Endothelial cell of umbilical vein (primary cell): ENCODE measurements at regions of chr9 and their contacts with region 1.

Region 1: DNA sequence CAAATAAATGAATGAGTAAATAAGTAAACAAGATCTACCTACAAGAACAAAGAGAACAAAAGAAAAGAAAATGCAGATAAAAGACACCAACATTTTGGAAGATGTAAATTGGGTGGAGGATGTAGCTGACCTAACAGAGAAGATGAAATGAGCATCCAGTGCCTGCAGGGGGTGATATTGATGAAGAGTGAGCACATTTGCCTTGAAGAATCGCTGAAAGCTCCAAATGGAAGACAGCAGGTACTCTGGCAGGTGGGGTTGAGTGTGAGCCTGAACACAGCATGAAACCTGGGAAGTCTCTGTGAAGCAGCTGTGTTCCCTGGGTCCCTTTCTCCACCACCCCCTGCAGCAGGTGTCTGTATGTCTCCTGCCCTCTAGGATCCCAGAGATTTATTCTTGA is 125.6 kb downstream of the NXNL2 start:
- DNase-seq: peak; percentile 46
- H3K4me3 ChIP-seq: no peak overlapping the region
- H3K27ac ChIP-seq: no peak overlapping the region
- H3K4me1 ChIP-seq: no peaks in the 10 kb centered on the region
- H3K27me3 ChIP-seq: no peaks in the 10 kb centered on the region
- CTCF ChIP-seq: peak; percentile 36 to 50
- POLR2A ChIP-seq: no peak

Region 2: GRCh38 chr9:88488166-88488565 is 172.4 kb before region 1 on chr9:
- CTCF ChIA-PET with region 1: no interaction called
- POLR2A ChIA-PET with region 1: no interaction called
- dilution Hi-C with region 1: no loop called
- intact Hi-C with region 1: no loop called
- DNase-seq: no peak
- H3K4me3 ChIP-seq: no peak overlapping the region
- H3K27ac ChIP-seq: no peak overlapping the region
- H3K4me1 ChIP-seq: no peaks in the 10 kb centered on the region
- H3K27me3 ChIP-seq: no peaks in the 10 kb centered on the region
- CTCF ChIP-seq: no peak
- POLR2A ChIP-seq: no peak

Region 3: DNA sequence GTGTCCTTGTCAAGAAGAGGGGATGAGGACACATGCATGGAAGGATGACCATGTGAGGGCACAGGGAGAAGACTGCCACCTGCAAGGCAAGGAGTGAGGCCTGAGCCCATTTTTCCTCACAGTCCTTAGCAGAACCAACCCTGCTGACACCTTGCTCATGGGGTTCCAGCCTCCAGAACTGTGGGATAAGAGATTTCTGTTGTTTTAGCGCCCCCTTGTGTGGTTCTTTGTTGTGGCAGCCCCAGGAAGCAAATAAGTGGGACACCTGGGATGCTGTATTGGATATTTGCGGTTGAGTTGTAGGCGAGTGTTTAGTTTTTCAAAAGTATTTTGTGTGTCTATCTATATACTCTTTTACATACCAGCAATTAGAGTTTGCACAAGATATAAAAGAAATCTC is 80.7 kb after region 1 on chr9:
- CTCF ChIA-PET with region 1: interaction called, 4 read pairs
- POLR2A ChIA-PET with region 1: no interaction called
- dilution Hi-C with region 1: no loop called
- intact Hi-C with region 1: loop called (anchors 2 kb)
- DNase-seq: no peak
- H3K4me3 ChIP-seq: no peak overlapping the region
- H3K27ac ChIP-seq: no peak overlapping the region
- H3K4me1 ChIP-seq: peaks cover 2% of the 10 kb centered on the region
- H3K27me3 ChIP-seq: no peaks in the 10 kb centered on the region
- CTCF ChIP-seq: peak; percentile 27 to 46
- POLR2A ChIP-seq: no peak

Region 4: DNA sequence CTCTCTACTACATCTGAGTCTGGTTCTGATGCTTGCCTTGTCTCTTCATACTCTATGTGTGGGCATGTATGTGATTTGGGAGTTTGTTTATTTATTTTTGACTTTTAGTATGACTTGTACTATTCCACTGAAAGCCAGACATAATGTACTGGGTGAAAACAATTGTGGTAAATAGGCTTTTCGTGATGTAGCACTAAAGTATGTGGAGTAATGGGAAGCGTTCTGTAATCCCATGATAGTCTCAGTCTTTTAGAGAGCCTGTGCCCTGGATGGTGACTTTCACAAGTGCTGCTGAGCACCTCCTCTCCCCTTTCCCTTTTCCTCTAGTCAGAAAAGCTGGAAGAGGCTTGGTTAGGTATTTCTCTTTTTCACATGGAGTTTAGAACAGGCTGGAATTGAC is 244.9 kb after region 1 on chr9:
- CTCF ChIA-PET with region 1: no interaction called
- POLR2A ChIA-PET with region 1: no interaction called
- dilution Hi-C with region 1: no loop called
- intact Hi-C with region 1: loop called (anchors 10 kb)
- DNase-seq: no peak
- H3K4me3 ChIP-seq: no peak overlapping the region
- H3K27ac ChIP-seq: no peak overlapping the region
- H3K4me1 ChIP-seq: no peaks in the 10 kb centered on the region
- H3K27me3 ChIP-seq: no peaks in the 10 kb centered on the region
- CTCF ChIP-seq: no peak
- POLR2A ChIP-seq: no peak

Region 5: DNA sequence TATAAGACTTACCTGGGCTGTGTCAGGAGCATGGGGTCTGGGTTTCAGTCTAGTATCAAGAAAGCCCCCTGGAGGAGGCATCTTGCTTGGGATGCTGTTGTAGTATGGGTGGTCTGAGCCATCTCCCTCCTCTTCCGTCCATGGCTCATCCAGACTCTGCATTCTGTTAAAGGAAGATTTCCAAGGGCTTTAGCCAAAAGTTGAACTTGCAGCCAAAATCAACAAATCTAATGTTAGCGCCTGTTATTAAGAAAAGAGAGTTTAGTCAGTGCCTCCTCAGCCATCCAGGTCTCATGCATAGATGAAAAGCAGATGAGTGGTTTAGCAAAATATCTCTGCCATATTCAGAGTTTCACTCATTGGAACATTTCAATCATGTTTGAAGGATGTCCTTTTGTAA is 386.2 kb after region 1 on chr9:
- CTCF ChIA-PET with region 1: no interaction called
- POLR2A ChIA-PET with region 1: no interaction called
- dilution Hi-C with region 1: no loop called
- intact Hi-C with region 1: no loop called
- DNase-seq: no peak
- H3K4me3 ChIP-seq: no peak overlapping the region
- H3K27ac ChIP-seq: no peak overlapping the region
- H3K4me1 ChIP-seq: peaks cover 4% of the 10 kb centered on the region
- H3K27me3 ChIP-seq: no peaks in the 10 kb centered on the region
- CTCF ChIP-seq: no peak
- POLR2A ChIP-seq: no peak